Prostate gland (tissue), 2 donors: ENCODE measurements at regions of chr22 and their contacts with region 1.

Region 1: GRCh38 chr22:17164392-17165024 is 5.4 kb upstream of the HDHD5 start:
- DNase-seq: no peak
- H3K4me3 ChIP-seq: no peak overlapping the region
- H3K27ac ChIP-seq: no peak overlapping the region
- H3K4me1 ChIP-seq: no peaks in the 10 kb centered on the region
- H3K27me3 ChIP-seq: no peaks in the 10 kb centered on the region
- CTCF ChIP-seq: no peak
- POLR2A ChIP-seq: no peak

Region 2: DNA sequence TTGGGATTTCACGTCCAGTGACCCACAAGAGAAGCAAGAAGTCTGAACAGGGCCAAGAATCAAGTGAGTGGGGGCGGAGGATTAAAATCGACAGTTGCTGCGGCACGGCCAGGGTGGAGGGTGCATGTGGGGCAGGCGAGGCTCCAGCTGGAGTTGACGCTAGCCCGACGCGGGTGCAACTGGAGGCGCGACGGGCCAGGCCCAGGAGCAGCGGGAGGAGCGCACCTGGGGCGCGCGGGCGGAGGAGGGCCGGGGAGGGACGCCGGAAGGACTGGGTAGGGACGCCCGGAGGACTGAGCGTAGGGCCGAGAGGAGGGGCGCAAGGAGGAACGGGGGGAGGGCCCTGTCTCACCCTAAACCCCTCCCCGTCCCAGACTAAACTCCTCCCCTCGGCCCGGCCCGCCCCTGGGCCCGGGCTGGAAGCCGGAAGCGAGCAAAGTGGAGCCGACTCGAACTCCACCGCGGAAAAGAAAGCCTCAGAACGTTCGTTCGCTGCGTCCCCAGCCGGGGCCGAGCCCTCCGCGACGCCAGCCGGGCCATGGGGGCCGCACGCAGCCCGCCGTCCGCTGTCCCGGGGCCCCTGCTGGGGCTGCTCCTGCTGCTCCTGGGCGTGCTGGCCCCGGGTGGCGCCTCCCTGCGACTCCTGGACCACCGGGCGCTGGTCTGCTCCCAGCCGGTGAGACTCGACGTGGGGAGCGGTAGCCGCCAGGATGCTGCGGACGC is 79.8 kb before region 1 on chr22 and contains the start of gene IL17RA:
- intact Hi-C with region 1: loop called (anchors 10 kb)
- DNase-seq: peak; percentile 91
- H3K4me3 ChIP-seq: peak within 1 kb of the TSS; percentile 73 to 96
- H3K27ac ChIP-seq: peak within 1 kb of the TSS; percentile 80 to 87
- H3K4me1 ChIP-seq: peaks cover 10% of the 10 kb centered on the region
- H3K27me3 ChIP-seq: no peaks in the 10 kb centered on the region
- CTCF ChIP-seq: peak in 1 of 4 experiments; percentile 9
- POLR2A ChIP-seq: peak; percentile 81
- total RNA-seq, gene IL17RA: 16.1 to 17.4 TPM